ENCODE measurements at regions of chr16 and their contacts with region 1.

Region 1: GRCh38 chr16:57023541-57024249 is 34.3 kb downstream of the NLRC5 start:
- DNase-seq: peak; percentile 62 to 92 (median 86)
- ATAC-seq: peak; percentile 92 to 97
- H3K4me3 Mint-ChIP-seq: peak overlapping the region; percentile 55 to 88 (median 78)
- H3K27ac Mint-ChIP-seq: peak overlapping the region; percentile 85 to 97 (median 92)
- H3K4me1 Mint-ChIP-seq: peaks cover 69 to 97% (median 90%) of the 10 kb centered on the region in 4 donors
- H3K27me3 Mint-ChIP-seq: no peaks in the 10 kb centered on the region

Region 2: DNA sequence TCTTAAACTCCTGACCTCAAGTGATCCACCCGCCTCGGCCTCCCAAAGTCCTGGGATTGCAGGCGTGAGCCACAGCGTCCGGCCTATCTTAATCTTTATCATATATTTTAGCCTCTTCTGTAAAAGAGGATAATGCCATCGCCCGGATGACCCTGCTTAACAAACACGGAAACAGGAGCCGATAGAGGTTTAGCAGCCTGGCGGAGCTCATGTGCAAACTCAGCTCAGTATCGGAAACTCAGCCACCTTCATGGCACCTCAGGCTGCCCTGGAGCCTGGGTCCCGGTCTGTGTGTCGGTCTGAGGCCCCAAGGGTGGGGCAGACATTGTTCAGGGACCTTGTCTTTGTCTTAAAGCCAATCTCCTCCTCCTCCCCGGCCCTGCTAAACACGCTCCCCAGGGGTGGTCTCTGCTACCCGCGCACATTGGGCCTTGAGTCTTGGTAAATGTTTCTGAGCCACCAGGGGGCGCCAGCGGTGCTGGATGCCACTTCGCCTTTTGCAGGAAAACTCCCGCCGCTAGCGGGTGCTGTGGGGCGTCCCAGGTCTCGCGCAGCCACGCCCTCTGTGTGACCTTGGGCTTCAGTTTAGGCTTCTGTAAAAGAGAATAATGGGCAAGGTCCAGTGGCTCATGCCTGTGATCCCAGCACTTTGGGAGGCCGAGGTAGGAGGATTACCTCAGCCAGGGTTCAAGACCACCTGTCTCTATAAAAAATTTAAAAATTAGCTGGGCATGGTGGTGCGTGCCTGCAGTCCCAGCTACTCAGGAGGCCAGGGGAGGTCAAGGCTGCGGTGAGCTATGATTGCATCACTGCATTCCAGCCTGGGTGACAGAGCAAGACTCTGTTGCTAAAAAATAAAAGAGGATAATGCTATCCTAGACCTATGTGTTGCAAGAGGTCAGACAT is 59.2 kb before region 1 on chr16:
- POLR2A ChIA-PET with region 1: interaction called, 14 read pairs
- DNase-seq: peak; percentile 87 to 96 (median 94)
- ATAC-seq: peak; percentile 92 to 94
- H3K4me3 Mint-ChIP-seq: peak overlapping the region in 6 of 10 donors; percentile 1 to 74 (median 50)
- H3K27ac Mint-ChIP-seq: peak overlapping the region; percentile 3 to 94 (median 86)
- H3K4me1 Mint-ChIP-seq: peaks cover 19 to 34% (median 25%) of the 10 kb centered on the region in 4 donors
- H3K27me3 Mint-ChIP-seq: no peaks in the 10 kb centered on the region

Region 3: DNA sequence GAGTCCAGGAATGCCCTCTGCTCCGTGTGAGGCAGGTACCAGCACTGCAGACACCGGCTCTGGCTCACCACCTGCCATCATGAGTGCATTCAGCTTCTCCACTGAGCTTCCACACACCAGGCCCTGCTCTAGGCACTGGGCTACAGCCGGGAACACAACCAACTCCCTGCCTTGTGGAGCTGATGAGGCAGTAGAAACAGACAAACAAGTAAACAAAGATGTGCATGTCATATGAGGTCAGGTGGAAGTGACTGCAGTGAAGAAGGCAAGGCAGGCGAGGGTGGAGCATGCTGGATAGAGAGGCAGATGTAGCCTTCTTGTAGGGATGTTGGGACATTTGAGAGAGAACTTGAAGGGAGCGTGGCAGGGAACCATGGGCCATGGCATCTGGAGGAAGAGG is 29.4 kb before region 1 on chr16:
- POLR2A ChIA-PET with region 1: interaction called, 196 read pairs
- DNase-seq: no peak
- ATAC-seq: peak in 1 of 2 donors; percentile 14
- H3K4me3 Mint-ChIP-seq: peak overlapping the region; percentile 76 to 100 (median 87)
- H3K27ac Mint-ChIP-seq: peak overlapping the region; percentile 86 to 98 (median 96)
- H3K4me1 Mint-ChIP-seq: peaks cover 46 to 88% (median 78%) of the 10 kb centered on the region in 4 donors
- H3K27me3 Mint-ChIP-seq: no peaks in the 10 kb centered on the region

Region 4: GRCh38 chr16:57061084-57061905 is 37.6 kb after region 1 on chr16:
- POLR2A ChIA-PET with region 1: no interaction called
- DNase-seq: no peak
- ATAC-seq: peak; percentile 32 to 37
- H3K4me3 Mint-ChIP-seq: peak overlapping the region in 4 of 10 donors; percentile 9 to 60 (median 30)
- H3K27ac Mint-ChIP-seq: peak overlapping the region; percentile 70 to 96 (median 85)
- H3K4me1 Mint-ChIP-seq: peaks cover 21 to 41% (median 30%) of the 10 kb centered on the region in 4 donors
- H3K27me3 Mint-ChIP-seq: no peaks in the 10 kb centered on the region